Activated CD4-positive, alpha-beta T cell treated with anti-CD3 and anti-CD28 coated beads, Interleukin-2, amount 10 ng/mL, durations not matched to agents 24 days and 14 days (primary cell): ENCODE measurements at regions of chr16 and their contacts with region 1.

Region 1: GRCh38 chr16:19898924-19899604 is 14.4 kb upstream of the GPRC5B start:
- DNase-seq: peak; percentile 83
- H3K4me3 Mint-ChIP-seq: no peak overlapping the region
- H3K27ac Mint-ChIP-seq: no peak overlapping the region
- H3K4me1 Mint-ChIP-seq: no peaks in the 10 kb centered on the region
- H3K27me3 Mint-ChIP-seq: peaks cover 4% of the 10 kb centered on the region

Region 2: GRCh38 chr16:20383106-20384029 is 484.3 kb after region 1 on chr16:
- intact Hi-C with region 1: loop called (anchors 2 kb)
- DNase-seq: peak; percentile 85
- H3K4me3 Mint-ChIP-seq: no peak overlapping the region
- H3K27ac Mint-ChIP-seq: no peak overlapping the region
- H3K4me1 Mint-ChIP-seq: no peaks in the 10 kb centered on the region
- H3K27me3 Mint-ChIP-seq: no peaks in the 10 kb centered on the region